ENCODE measurements at regions of chr5 and their contacts with region 1.

Region 1: GRCh38 chr5:173324115-173325001 is 3.9 kb downstream of the STC2 start:
- DNase-seq: no peak
- H3K4me3 ChIP-seq: peak overlapping the region; percentile 32 to 42 (median 34)
- H3K27ac ChIP-seq: peak overlapping the region; percentile 54 to 83 (median 67)
- H3K4me1 ChIP-seq: peaks cover 54 to 100% (median 88%) of the 10 kb centered on the region in 4 donors
- H3K27me3 ChIP-seq: peaks cover 4 to 31% (median 7%) of the 10 kb centered on the region in 4 donors
- CTCF ChIP-seq: no peak
- EP300 ChIP-seq: no peak
- POLR2A ChIP-seq: no peak

Region 2: DNA sequence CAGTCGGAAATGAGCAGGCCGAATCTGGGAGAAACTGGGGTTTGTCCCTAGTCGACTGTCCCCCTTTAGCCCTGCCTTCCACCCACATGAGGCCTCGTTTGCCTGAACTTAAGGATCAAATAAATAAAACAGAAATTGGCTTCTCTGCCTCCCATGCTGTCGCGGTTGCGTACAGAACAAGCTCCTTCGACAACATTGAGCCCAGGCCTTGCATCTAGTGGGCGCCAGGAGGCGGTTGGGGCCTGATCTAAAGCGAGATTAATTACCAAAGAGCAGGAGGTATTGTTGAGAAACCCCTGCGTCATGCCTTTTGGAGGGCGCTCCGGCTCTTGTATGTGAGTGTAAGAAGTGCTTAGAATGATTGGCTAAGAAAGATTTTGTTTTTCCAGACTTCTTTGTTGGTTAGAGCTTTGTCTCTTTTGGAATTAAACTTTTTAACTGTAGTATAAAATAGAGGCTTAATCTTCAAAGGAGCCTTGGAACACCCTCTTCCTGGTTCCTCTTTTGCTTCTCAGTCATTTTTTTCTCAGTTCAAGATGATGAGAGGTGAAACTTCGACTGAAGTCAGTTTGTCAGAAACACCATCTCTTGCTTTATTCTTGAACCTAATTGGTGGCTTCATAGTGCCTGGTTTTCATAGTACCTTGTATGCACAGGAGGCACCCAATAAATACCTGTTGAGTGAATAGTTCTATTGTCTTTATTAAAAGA is 340.0 kb before region 1 on chr5:
- intact Hi-C with region 1: no loop called
- DNase-seq: peak; percentile 96
- H3K4me3 ChIP-seq: peak overlapping the region; percentile 81 to 95 (median 90)
- H3K27ac ChIP-seq: peak overlapping the region; percentile 94 to 98 (median 96)
- H3K4me1 ChIP-seq: peaks cover 17 to 53% (median 42%) of the 10 kb centered on the region in 4 donors
- H3K27me3 ChIP-seq: no peaks in the 10 kb centered on the region
- CTCF ChIP-seq: peak; percentile 38 to 52 (median 48)
- EP300 ChIP-seq: no peak
- POLR2A ChIP-seq: no peak

Region 3: GRCh38 chr5:173498286-173498685 is 173.9 kb after region 1 on chr5:
- intact Hi-C with region 1: loop called (anchors 5 kb)
- DNase-seq: peak; percentile 93
- H3K4me3 ChIP-seq: no peak overlapping the region
- H3K27ac ChIP-seq: peak overlapping the region; percentile 87 to 92 (median 92)
- H3K4me1 ChIP-seq: peaks cover 47 to 93% (median 79%) of the 10 kb centered on the region in 4 donors
- H3K27me3 ChIP-seq: no peaks in the 10 kb centered on the region
- CTCF ChIP-seq: no peak
- EP300 ChIP-seq: no peak
- POLR2A ChIP-seq: no peak